ENCODE measurements at regions of chr2 and their contacts with region 1.

Region 1: DNA sequence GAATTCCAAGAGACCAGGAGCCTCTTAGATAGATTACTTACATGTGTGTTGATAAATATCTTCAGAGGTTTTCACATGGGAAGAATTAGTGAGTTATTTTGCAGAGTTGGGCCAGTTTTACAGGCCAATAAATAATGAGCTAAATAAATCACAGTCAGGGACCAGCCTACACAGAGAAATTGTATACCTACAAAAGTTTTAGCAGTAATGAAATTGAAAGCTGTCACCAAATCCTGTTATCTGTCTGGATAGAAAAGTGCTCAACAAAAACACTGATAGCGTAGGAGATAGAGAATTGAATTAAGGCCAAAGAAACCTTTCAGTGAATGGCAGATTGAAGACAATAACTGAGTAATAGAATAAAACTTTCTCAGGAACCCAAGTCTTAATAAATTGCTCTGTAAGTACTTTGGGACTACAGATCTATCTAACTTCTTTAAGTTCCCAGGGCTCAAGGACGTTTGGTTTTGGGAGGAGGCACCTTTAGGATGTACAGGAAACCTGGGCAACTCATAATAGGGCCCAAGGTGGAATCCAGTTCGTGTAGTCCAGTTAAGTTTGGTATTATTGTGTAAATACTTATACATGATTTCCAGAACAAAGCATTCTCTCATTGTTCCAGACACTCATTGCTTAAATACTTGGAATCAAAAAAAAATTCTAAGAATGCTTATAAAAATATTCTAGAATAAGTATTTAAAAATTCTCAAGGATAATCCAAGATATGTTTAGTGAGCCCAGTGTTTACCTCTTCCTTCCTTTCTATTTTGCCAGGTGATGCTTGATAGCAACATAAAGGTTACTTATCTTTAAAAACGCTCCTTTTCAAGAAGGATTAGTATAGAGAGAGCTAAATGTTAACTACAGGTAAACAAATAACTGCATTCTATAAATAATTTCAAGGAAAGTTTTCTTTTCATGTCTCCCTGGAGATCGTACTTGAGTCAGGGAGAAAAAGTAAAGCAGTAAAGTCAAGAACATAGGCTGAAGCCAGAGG is 134.5 kb downstream of the NCKAP5 start:
- DNase-seq: no peak

Region 2: GRCh38 chr2:133496501-133497269 is 62.9 kb after region 1 on chr2:
- intact Hi-C with region 1: no loop called
- DNase-seq: no peak

Region 3: DNA sequence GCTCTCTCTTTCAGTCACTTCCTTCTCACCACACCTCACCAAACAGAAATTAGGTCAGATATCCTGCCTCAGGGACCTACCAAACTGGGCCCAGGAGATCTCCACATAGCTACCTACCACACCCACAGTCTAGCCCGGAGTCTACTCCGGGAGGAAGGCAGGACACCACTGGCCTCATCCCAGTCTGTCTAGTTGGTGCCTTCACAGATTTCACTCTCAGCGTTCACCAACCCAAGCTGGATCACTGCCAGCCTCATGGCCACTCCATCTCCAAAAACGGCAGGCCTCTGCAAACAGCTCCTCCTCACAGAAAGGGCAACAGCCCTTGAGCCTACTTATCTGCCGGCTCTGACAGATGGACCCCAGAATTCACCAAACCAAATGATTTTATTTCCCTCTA is 73.2 kb after region 1 on chr2:
- intact Hi-C with region 1: loop called (anchors 2 kb)
- DNase-seq: no peak

Measured in cardiac septum (tissue), 1 donor.